ENCODE measurements at regions of chr14 and their contacts with region 1.

Region 1: DNA sequence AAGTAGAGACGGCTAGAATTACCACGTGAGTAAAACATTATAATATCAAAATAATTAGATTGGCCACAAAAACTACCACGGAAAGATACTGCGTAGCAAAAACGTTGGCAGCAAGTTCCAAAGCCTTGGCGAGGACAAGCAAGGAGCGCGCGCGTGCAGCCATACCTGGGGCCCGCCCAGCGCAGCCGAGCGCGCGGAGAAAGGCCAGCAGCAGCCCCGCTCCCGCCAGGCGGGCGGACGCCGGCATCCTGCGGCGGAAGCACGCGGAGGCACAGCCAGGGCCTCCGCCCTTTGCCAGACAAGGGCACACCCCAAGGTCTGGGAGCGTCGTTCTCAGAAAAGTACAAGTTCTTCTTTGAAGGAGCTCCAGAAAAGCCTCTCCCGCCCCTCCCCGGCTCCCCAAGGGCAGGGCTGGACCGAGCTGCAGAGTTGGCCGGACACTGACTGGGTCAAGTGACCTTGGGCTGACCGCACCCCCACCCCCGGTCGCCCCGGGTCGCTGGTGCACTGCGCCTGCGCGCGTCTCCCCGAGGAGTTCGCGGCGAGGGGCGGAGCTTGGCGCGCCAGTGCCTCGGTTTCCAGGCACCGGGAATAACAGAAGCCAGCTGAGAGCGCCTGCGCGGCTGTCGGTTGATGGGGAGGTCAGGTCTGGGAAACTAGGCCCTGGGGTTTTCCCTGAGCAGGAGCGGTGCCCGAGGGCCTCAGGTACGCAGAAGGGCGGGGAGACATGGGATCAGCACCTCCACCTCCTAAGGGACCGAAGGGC is at the start of gene ZC2HC1C:
- DNase-seq: peak; percentile 94 to 100
- H3K4me3 ChIP-seq: peak within 1 kb of the TSS; percentile 71
- H3K27ac ChIP-seq: peak within 1 kb of the TSS; percentile 79
- H3K4me1 ChIP-seq: peaks cover 32% of the 10 kb centered on the region
- H3K27me3 ChIP-seq: no peaks in the 10 kb centered on the region
- CTCF ChIP-seq: no peak
- total RNA-seq, gene ZC2HC1C: 11.9 and 13.8 TPM in 2 replicates

Region 2: DNA sequence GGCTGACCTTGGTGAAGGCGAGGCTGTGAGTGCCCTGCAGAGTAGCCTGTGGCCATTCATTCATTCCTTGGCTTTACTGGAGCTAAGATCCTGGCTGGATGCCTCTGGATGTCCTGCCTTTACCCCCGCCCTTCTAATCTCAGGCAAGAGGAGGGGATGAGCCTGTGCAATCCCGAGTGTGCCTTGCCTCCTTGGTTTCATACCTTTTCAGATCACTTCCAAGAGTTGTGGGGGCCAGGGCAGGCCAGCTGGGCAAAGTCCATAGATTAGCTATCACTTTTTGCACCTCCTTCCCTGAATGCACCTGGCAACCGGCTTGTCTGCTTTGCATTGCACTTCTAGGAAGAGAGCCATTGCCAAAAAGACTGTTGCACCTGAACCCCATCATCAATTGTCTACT is 719.5 kb before region 1 on chr14:
- CTCF ChIA-PET with region 1: no interaction called
- POLR2A ChIA-PET with region 1: interaction called, 27 read pairs
- intact Hi-C with region 1: no loop called
- DNase-seq: no peak
- H3K4me3 ChIP-seq: no peak overlapping the region
- H3K27ac ChIP-seq: no peak overlapping the region
- H3K4me1 ChIP-seq: peaks cover 11% of the 10 kb centered on the region
- H3K27me3 ChIP-seq: peaks cover 4% of the 10 kb centered on the region; the same call in 1 of the 2 replicates
- CTCF ChIP-seq: no peak

Region 3: GRCh38 chr14:74988131-74988530 is 81.1 kb before region 1 on chr14:
- CTCF ChIA-PET with region 1: interaction called, 4 read pairs
- POLR2A ChIA-PET with region 1: interaction called, 4 read pairs
- intact Hi-C with region 1: loop called (anchors 1 kb)
- DNase-seq: peak; percentile 94 to 100
- H3K4me3 ChIP-seq: no peak overlapping the region
- H3K27ac ChIP-seq: peak overlapping the region; percentile 38
- H3K4me1 ChIP-seq: peaks cover 43% of the 10 kb centered on the region
- H3K27me3 ChIP-seq: no peaks in the 10 kb centered on the region
- CTCF ChIP-seq: no peak; the same call in 1 of the 2 replicates

Region 4: DNA sequence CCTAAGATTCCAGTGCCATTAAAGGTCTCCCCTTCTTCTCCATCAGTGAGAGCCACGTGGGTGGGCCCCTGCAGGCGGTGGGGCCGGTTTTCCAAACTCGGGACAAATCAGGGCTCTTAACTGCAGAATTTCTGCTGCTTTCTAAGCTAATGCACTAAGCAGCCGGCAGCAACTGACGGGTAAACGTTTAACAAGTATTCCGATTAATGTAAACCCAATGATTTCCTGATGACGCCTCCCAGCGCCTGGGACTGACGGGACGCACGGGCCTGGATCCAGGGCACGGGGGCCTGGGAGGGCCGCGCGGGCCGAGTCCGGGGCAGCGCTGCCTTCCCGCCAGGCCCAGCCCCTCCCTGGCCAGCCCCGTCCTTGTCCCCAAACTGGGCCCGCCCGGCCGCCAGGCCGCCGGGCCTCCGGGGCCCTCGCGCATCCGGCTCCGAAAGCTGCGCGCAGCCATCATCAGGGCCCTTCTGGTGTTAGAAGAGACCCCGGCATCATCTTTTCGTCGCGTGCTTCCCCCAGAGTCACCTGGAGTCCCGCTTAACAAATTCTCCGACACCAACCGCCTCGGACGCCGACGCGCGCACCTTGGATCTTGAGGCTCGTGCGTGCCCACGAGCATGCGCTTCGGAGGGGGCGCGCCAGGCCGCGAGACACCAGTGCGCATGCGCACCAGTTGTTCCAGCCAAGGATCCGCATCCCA is 18.2 kb before region 1 on chr14 and contains the start of gene MLH3:
- CTCF ChIA-PET with region 1: interaction called, 3 read pairs
- POLR2A ChIA-PET with region 1: interaction called, 5 read pairs
- intact Hi-C with region 1: loop called (anchors 2 kb)
- DNase-seq: peak; percentile 79 to 93
- H3K4me3 ChIP-seq: peak within 1 kb of the TSS; percentile 82
- H3K27ac ChIP-seq: peak within 1 kb of the TSS; percentile 61
- H3K4me1 ChIP-seq: peaks cover 15% of the 10 kb centered on the region
- H3K27me3 ChIP-seq: no peaks in the 10 kb centered on the region
- CTCF ChIP-seq: 0 out of 2 replicates have a peak, but pooled peaks have one; percentile 5
- total RNA-seq, gene MLH3: 47.6 and 48.7 TPM in 2 replicates